ENCODE measurements at regions of chr12 and their contacts with region 1.

Region 1: DNA sequence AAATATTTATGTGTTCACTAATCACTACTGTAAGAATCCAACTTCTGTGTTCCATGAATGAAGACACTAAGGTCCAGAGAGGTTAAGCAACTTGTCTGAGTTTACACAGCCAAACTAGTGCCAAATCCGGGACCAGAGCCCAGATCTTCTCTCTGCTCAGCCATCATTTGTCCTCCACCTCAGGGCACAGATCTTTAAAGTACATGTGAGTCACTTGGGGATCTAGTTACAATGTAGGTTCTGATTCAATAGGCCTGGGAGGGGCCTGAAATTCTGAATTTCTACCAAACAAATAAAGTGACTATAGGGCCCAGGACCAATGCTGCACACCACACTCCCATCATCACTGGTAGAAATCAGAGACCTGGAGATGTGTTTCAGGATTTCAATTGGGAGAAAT is 162.9 kb downstream of the GXYLT1 start:
- DNase-seq: no peak
- ATAC-seq: no peak
- H3K4me3 ChIP-seq: no peak overlapping the region
- H3K27ac ChIP-seq: no peak overlapping the region
- H3K4me1 ChIP-seq: peaks cover 25% of the 10 kb centered on the region
- H3K27me3 ChIP-seq: no peaks in the 10 kb centered on the region
- CTCF ChIP-seq: no peak
- EP300 ChIP-seq: no peak
- POLR2A ChIP-seq: no peak
- RAD21 ChIP-seq: no peak

Region 2: DNA sequence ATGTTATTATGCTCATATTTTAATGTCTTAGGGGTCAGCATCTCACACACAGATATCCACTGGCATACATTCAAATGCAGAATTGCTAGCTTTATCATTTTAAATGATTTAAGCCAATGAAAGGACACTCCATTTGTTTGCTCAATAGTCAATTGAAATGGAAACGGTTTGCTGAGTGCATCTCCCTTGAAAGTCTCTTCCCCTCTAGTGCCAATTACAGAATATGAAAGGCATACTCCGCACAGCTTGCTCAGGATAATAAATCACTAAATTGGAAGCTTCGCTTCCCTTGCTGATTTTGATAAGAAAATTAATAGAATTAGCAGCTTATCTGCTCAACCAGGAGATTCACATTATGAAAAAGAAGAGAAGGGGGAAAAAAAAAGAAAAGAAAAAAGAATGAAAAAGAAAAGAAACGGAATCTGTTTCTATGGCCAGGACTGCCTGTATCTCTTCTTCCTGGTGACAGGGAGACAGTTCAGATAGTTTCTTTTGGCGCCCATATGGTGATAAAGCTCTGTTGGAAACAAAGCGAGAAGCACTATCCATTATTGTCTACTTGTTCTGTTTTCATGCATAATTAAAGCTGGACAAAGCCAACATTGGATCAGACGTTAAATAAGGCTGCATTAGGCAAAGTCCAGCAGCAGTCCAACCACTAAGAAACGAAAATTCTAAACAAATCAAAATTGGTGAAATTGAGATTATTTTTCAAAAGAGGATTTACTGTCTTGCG is 62.1 kb before region 1 on chr12:
- CTCF ChIA-PET with region 1: no interaction called
- POLR2A ChIA-PET with region 1: no interaction called
- in situ Hi-C with region 1: no loop called
- intact Hi-C with region 1: loop called (anchors 10 kb)
- DNase-seq: no peak
- ATAC-seq: no peak
- H3K4me3 ChIP-seq: no peak overlapping the region
- H3K27ac ChIP-seq: no peak overlapping the region
- H3K4me1 ChIP-seq: no peaks in the 10 kb centered on the region
- H3K27me3 ChIP-seq: peaks cover 0 to 5% of the 10 kb centered on the region in 2 experiments; a peak in 1 of 5 replicates
- CTCF ChIP-seq: no peak
- EP300 ChIP-seq: no peak
- POLR2A ChIP-seq: no peak
- RAD21 ChIP-seq: no peak

Region 3: DNA sequence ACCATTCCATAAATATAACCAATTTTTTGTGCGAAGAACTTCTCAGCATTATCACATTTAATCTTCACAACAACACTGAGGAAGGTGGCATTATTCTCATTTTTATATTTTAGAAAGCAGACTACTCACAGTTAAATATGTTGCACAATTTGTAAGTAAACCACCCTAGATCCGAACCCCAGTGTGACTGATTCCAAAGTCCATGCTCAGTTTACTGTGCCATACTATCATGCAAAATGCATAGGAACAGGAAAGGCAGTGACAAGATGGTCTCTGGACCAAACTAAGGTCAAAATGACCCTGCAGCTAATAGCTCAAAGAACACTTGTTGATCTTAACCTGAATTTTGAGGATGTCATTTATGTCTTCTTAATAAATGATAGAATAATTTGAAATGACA is 22.5 kb before region 1 on chr12:
- CTCF ChIA-PET with region 1: no interaction called
- POLR2A ChIA-PET with region 1: no interaction called
- in situ Hi-C with region 1: no loop called
- intact Hi-C with region 1: loop called (anchors 1 kb)
- DNase-seq: peak; percentile 14
- ATAC-seq: peak; percentile 32; the same call in 1 of the 3 replicates
- H3K4me3 ChIP-seq: no peak overlapping the region
- H3K27ac ChIP-seq: no peak overlapping the region
- H3K4me1 ChIP-seq: peaks cover 10% of the 10 kb centered on the region; the same call in 1 of the 2 replicates
- H3K27me3 ChIP-seq: no peaks in the 10 kb centered on the region
- CTCF ChIP-seq: no peak
- EP300 ChIP-seq: no peak
- POLR2A ChIP-seq: no peak
- RAD21 ChIP-seq: no peak

Region 4: GRCh38 chr12:42070036-42070435 is 88.3 kb after region 1 on chr12:
- CTCF ChIA-PET with region 1: no interaction called
- POLR2A ChIA-PET with region 1: no interaction called
- in situ Hi-C with region 1: no loop called
- intact Hi-C with region 1: no loop called
- DNase-seq: no peak
- ATAC-seq: no peak
- H3K4me3 ChIP-seq: no peak overlapping the region
- H3K27ac ChIP-seq: no peak overlapping the region
- H3K4me1 ChIP-seq: no peaks in the 10 kb centered on the region
- H3K27me3 ChIP-seq: no peaks in the 10 kb centered on the region
- CTCF ChIP-seq: no peak
- EP300 ChIP-seq: no peak
- POLR2A ChIP-seq: no peak
- RAD21 ChIP-seq: no peak

Measured in HepG2 (cell line).